GM10248 (cell line): ENCODE measurements at regions of chr19 and their contacts with region 1.

Region 1: GRCh38 chr19:10936661-10937084 is 8.1 kb downstream of the TIMM29 start:
- DNase-seq: peak; percentile 68
- CTCF ChIP-seq: peak; percentile 58

Region 2: GRCh38 chr19:10952809-10953208 is 16.1 kb after region 1 on chr19:
- CTCF ChIA-PET with region 1: interaction called, 26 read pairs
- POLR2A ChIA-PET with region 1: no interaction called
- DNase-seq: no peak
- CTCF ChIP-seq: no peak

Region 3: GRCh38 chr19:10979951-10980381 is 43.3 kb after region 1 on chr19:
- CTCF ChIA-PET with region 1: interaction called, 15 read pairs
- POLR2A ChIA-PET with region 1: no interaction called
- DNase-seq: no peak
- CTCF ChIP-seq: no peak

Region 4: GRCh38 chr19:11035441-11036377 is 99.0 kb after region 1 on chr19:
- CTCF ChIA-PET with region 1: interaction called, 19 read pairs
- POLR2A ChIA-PET with region 1: no interaction called
- DNase-seq: peak; percentile 92
- CTCF ChIP-seq: peak; percentile 95

Region 5: DNA sequence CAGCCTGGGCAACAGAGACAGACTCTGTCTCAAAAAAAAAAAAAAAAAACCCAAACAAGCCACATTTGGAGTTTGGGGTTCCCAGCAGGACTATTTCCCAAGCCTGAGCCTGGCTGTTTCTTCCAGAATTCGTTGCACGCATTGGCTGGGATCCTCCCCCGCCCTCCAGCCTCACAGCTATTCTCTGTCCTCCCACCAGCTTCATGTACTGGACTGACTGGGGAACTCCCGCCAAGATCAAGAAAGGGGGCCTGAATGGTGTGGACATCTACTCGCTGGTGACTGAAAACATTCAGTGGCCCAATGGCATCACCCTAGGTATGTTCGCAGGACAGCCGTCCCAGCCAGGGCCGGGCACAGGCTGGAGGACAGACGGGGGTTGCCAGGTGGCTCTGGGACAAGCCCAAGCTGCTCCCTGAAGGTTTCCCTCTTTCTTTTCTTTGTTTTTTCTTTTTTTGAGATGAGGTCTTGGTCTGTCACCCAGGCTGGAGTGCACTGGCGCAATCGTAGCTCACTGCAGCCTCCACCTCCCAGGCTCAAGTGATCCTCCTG is 179.3 kb after region 1 on chr19:
- CTCF ChIA-PET with region 1: no interaction called
- POLR2A ChIA-PET with region 1: no interaction called
- DNase-seq: no peak
- CTCF ChIP-seq: no peak

Region 6: GRCh38 chr19:11142528-11143171 is 206.0 kb after region 1 on chr19:
- CTCF ChIA-PET with region 1: no interaction called
- POLR2A ChIA-PET with region 1: no interaction called
- DNase-seq: no peak
- CTCF ChIP-seq: no peak